MCF 10A (cell line): ENCODE measurements at regions of chr17 and their contacts with region 1.

Region 1: GRCh38 chr17:51537996-51538550 is 277.7 kb downstream of the UTP18 start:
- DNase-seq: no peak
- H3K4me3 Mint-ChIP-seq: no peak overlapping the region
- H3K27ac Mint-ChIP-seq: no peak overlapping the region
- H3K4me1 Mint-ChIP-seq: no peaks in the 10 kb centered on the region
- H3K27me3 Mint-ChIP-seq: no peaks in the 10 kb centered on the region
- CTCF ChIP-seq: no peak

Region 2: GRCh38 chr17:51298508-51299371 is 239.3 kb before region 1 on chr17:
- CTCF ChIA-PET with region 1: interaction called, 93 read pairs
- POLR2A ChIA-PET with region 1: no interaction called
- intact Hi-C with region 1: loop called (anchors 1 kb)
- DNase-seq: peak; percentile 61
- H3K4me3 Mint-ChIP-seq: no peak overlapping the region
- H3K27ac Mint-ChIP-seq: no peak overlapping the region
- H3K4me1 Mint-ChIP-seq: no peaks in the 10 kb centered on the region
- H3K27me3 Mint-ChIP-seq: no peaks in the 10 kb centered on the region
- CTCF ChIP-seq: peak; percentile 59

Region 3: DNA sequence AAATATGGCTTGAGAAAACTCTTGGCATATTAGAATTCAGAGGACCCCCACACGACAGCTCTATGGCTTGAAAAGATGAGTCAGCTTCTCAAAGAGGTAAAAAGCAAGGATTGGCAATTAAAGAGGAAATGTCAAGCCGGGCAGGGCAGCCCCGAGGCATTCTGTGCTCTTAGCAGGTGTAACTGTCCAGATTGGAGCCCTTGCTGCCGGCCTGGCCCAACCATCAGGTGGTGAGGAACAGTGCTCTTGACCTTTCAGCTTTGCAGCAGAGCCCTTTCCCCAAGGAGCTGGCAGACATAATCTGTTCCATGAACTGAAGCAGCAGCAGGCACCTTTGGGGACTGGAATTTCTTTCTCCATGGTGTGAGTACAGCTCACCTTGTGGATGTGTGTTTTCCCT is 10.1 kb after region 1 on chr17:
- CTCF ChIA-PET with region 1: interaction called, 21 read pairs
- POLR2A ChIA-PET with region 1: no interaction called
- intact Hi-C with region 1: no loop called
- DNase-seq: no peak
- H3K4me3 Mint-ChIP-seq: no peak overlapping the region
- H3K27ac Mint-ChIP-seq: no peak overlapping the region
- H3K4me1 Mint-ChIP-seq: no peaks in the 10 kb centered on the region
- H3K27me3 Mint-ChIP-seq: peaks cover 11% of the 10 kb centered on the region
- CTCF ChIP-seq: no peak

Region 4: DNA sequence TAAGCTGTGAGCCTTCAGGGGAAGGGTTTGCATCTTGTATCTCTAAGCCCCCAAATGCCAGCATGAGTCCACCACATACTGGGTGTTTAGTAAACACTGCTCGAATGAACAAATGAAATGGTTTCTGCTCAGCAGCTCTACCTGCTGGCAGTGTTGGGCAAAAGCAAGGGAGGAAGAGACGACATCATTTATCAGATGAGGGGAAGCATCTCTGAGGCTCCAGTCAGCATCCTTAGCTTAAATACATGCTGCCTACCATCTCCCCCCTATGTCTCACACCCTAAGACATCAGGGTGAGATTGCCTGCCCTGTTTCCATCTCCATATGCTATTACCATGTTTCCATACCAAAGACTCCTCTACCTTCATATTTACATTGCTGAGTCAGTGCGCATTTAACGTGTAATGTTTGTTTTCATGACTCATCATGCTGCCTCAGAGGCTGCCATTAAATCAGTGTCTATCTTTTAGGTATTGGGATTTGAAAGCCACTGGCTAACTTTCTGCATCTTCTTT is 102.1 kb after region 1 on chr17:
- CTCF ChIA-PET with region 1: no interaction called
- POLR2A ChIA-PET with region 1: no interaction called
- intact Hi-C with region 1: no loop called
- DNase-seq: peak; percentile 69
- H3K4me3 Mint-ChIP-seq: no peak overlapping the region
- H3K27ac Mint-ChIP-seq: no peak overlapping the region
- H3K4me1 Mint-ChIP-seq: peaks cover 22% of the 10 kb centered on the region
- H3K27me3 Mint-ChIP-seq: peaks cover 10% of the 10 kb centered on the region
- CTCF ChIP-seq: peak; percentile 41